Naive thymus-derived CD8-positive, alpha-beta T cell (primary cell): ENCODE measurements at regions of chr11 and their contacts with region 1.

Region 1: DNA sequence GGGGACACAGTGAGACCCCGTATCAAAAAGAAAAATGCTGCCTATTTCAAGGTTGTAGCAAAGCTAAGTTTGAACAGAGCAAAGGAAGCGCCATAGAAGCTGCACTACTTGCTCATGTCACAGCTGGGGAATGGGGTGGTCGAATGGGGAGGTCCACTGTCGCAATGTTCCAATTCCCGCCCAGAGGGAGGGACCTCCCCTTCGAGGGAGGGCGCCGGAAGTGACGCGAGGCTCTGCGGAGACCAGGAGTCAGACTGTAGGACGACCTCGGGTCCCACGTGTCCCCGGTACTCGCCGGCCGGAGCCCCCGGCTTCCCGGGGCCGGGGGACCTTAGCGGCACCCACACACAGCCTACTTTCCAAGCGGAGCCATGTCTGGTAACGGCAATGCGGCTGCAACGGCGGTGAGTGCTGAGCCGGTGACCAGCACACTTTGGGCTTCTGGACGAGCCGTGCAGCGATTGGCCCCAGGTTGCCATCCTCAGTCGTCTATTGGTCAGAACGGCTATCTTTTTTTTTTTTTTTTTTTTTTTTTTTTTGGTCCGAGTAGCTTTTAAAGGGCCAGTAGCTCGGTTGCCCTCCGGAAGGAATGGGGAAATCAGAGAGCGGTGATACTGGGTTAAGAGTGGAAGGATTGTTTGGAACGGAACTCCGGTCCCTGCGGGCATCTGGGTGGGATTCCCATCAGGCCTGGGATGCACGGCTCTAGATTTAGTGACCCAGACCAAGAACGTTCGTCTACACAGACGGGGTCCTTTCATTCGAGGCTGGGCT is at the start of gene HMBS:
- DNase-seq: peak; percentile 79 to 97 (median 90)
- ATAC-seq: peak; percentile 89 to 95
- H3K4me3 Mint-ChIP-seq: peak within 1 kb of the TSS; percentile 87 to 97 (median 94)
- H3K27ac Mint-ChIP-seq: peak within 1 kb of the TSS; percentile 90 to 97 (median 96)
- H3K4me1 Mint-ChIP-seq: peaks cover 5 to 34% (median 25%) of the 10 kb centered on the region in 4 donors
- H3K27me3 Mint-ChIP-seq: no peaks in the 10 kb centered on the region
- polyA plus RNA-seq, gene HMBS: 20.0 to 32.7 (median 24.3) TPM

Region 2: GRCh38 chr11:118980191-118980881 is 104.5 kb before region 1 on chr11:
- POLR2A ChIA-PET with region 1: no interaction called
- DNase-seq: no peak
- ATAC-seq: no peak
- H3K4me3 Mint-ChIP-seq: no peak overlapping the region
- H3K27ac Mint-ChIP-seq: peak overlapping the region in 1 of 10 donors; percentile 40
- H3K4me1 Mint-ChIP-seq: peaks cover 0 to 6% (median 0%) of the 10 kb centered on the region in 4 donors
- H3K27me3 Mint-ChIP-seq: peaks cover 0 to 8% (median 2%) of the 10 kb centered on the region in 5 donors

Region 3: DNA sequence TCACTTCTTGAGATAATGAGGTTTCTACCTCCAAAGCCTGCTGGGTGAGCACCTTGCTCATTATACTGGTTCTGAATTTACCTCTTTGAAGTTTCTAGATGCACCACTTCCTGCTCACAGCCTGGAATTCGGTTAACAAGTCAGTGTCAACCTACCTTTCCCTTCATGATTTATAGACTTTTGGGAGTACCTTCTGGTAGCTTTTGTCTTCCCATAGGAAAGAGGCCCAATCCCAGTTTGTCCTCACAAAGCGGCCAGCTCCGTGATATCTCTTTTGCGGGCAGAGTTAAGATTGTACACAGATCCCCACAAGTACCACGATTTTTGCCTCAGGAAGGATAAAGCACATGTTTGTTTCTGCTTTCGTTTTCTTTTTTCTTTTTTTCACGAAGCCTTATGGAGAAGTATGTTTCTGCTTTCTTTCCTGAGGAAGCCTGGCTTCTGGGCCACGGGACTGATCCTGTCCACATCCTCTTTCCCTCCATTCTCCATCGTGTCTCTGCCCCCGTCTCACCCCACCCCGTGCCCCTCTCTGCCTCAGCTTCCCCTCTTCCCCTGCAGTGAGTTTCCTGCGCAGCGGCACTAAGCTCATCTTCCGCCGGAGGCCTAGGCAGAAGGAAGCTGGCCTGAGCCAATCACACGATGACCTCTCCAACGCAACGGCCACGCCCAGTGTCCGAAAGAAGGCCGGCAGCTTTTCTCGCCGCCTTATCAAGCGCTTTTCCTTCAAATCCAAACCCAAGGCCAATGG is 30.8 kb after region 1 on chr11:
- POLR2A ChIA-PET with region 1: interaction called, 18 read pairs
- DNase-seq: peak in 5 of 10 donors; percentile 29 to 74 (median 57)
- ATAC-seq: peak; percentile 89 to 95
- H3K4me3 Mint-ChIP-seq: peak overlapping the region; percentile 79 to 91 (median 85)
- H3K27ac Mint-ChIP-seq: peak overlapping the region; percentile 92 to 99 (median 98)
- H3K4me1 Mint-ChIP-seq: peaks cover 25 to 54% (median 38%) of the 10 kb centered on the region in 4 donors
- H3K27me3 Mint-ChIP-seq: no peaks in the 10 kb centered on the region